Sigmoid colon (tissue), 7 donors: ENCODE measurements at regions of chr1 and their contacts with region 1.

Region 1: GRCh38 chr1:43454266-43455011 is 708 bp upstream of the HYI start:
- DNase-seq: peak; percentile 88
- H3K4me3 ChIP-seq: peak overlapping the region; percentile 49 to 77 (median 67)
- H3K27ac ChIP-seq: peak overlapping the region; percentile 90 to 97 (median 94)
- H3K4me1 ChIP-seq: peaks cover 0 to 22% (median 20%) of the 10 kb centered on the region in 4 donors
- H3K27me3 ChIP-seq: no peaks in the 10 kb centered on the region
- CTCF ChIP-seq: peak in 1 of 4 experiments; percentile 28
- EP300 ChIP-seq: no peak
- POLR2A ChIP-seq: peak in 1 of 2 donors; percentile 50

Region 2: DNA sequence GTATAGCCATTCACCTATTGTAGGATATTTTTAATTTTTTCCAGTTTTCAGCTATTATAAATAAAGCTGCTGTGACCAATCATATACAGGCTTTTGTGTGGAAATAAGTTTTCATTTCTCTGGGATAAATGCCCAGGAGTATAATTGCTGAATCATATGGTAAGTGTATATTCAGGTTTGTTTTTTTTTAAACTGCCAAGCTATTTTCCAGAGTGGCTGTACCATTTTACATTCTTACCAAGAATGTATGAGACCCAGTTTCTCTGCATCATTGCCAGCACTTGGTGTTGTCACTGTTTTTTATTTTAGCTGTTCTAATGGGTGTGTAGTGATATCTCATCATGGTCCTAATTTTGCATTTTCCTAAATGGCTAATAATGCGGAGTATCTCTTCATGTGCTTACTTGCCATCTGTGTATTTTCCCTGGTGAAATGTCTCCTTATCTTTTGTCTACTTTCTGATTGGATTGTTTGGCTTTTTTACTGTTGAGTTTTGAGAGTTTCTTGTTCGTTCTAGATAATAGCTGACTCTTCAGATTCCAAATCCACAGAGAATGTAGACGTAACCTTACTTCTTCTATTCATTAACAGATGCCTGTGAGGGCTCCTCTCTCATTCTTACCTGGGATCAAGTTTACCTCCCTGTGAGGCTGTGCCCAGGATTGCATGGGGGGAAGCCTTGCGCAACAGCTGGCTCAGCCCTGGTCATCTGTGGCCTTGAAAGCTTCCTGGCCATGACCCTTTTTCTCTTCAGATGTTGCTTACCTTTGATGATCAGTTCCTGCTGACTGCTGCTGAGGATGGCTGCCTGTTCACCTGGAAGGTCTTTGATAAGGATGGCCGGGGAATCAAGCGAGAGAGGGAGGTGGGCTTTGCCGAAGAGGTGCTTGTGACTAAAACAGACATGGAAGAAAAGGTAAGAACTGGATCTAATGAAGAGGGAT is 239.7 kb before region 1 on chr1:
- intact Hi-C with region 1: no loop called
- DNase-seq: no peak
- H3K4me3 ChIP-seq: no peak overlapping the region
- H3K27ac ChIP-seq: no peak overlapping the region
- H3K4me1 ChIP-seq: no peaks in the 10 kb centered on the region
- H3K27me3 ChIP-seq: no peaks in the 10 kb centered on the region
- CTCF ChIP-seq: no peak
- EP300 ChIP-seq: no peak
- POLR2A ChIP-seq: no peak

Region 3: GRCh38 chr1:43329995-43330751 is 124.3 kb before region 1 on chr1:
- intact Hi-C with region 1: no loop called
- DNase-seq: peak; percentile 58
- H3K4me3 ChIP-seq: no peak overlapping the region
- H3K27ac ChIP-seq: no peak overlapping the region
- H3K4me1 ChIP-seq: no peaks in the 10 kb centered on the region
- H3K27me3 ChIP-seq: no peaks in the 10 kb centered on the region
- CTCF ChIP-seq: no peak
- EP300 ChIP-seq: no peak
- POLR2A ChIP-seq: no peak

Region 4: GRCh38 chr1:43358746-43359693 is 95.4 kb before region 1 on chr1 and contains the start of gene CDC20:
- intact Hi-C with region 1: loop called (anchors 5 kb)
- DNase-seq: peak; percentile 99
- H3K4me3 ChIP-seq: peak within 1 kb of the TSS; percentile 52 to 78 (median 60)
- H3K27ac ChIP-seq: peak within 1 kb of the TSS; percentile 88 to 96 (median 92)
- H3K4me1 ChIP-seq: peaks cover 0 to 18% (median 13%) of the 10 kb centered on the region in 4 donors
- H3K27me3 ChIP-seq: no peaks in the 10 kb centered on the region
- CTCF ChIP-seq: no peak
- EP300 ChIP-seq: no peak
- POLR2A ChIP-seq: no peak
- total RNA-seq, gene CDC20: 0.66 to 3.4 (median 1.2) TPM

Region 5: GRCh38 chr1:43402089-43402865 is 52.2 kb before region 1 on chr1:
- intact Hi-C with region 1: no loop called
- DNase-seq: no peak
- H3K4me3 ChIP-seq: no peak overlapping the region
- H3K27ac ChIP-seq: no peak overlapping the region
- H3K4me1 ChIP-seq: no peaks in the 10 kb centered on the region
- H3K27me3 ChIP-seq: no peaks in the 10 kb centered on the region
- CTCF ChIP-seq: no peak
- EP300 ChIP-seq: no peak
- POLR2A ChIP-seq: no peak

Region 6: GRCh38 chr1:43541734-43542401 is 87.4 kb after region 1 on chr1:
- intact Hi-C with region 1: no loop called
- DNase-seq: peak; percentile 94
- H3K4me3 ChIP-seq: no peak overlapping the region
- H3K27ac ChIP-seq: peak overlapping the region; percentile 77 to 84 (median 82)
- H3K4me1 ChIP-seq: peaks cover 0 to 74% (median 69%) of the 10 kb centered on the region in 4 donors
- H3K27me3 ChIP-seq: no peaks in the 10 kb centered on the region
- CTCF ChIP-seq: no peak
- EP300 ChIP-seq: no peak
- POLR2A ChIP-seq: no peak